Caco-2 (cell line): ENCODE measurements at regions of chr22 and their contacts with region 1.

Region 1: DNA sequence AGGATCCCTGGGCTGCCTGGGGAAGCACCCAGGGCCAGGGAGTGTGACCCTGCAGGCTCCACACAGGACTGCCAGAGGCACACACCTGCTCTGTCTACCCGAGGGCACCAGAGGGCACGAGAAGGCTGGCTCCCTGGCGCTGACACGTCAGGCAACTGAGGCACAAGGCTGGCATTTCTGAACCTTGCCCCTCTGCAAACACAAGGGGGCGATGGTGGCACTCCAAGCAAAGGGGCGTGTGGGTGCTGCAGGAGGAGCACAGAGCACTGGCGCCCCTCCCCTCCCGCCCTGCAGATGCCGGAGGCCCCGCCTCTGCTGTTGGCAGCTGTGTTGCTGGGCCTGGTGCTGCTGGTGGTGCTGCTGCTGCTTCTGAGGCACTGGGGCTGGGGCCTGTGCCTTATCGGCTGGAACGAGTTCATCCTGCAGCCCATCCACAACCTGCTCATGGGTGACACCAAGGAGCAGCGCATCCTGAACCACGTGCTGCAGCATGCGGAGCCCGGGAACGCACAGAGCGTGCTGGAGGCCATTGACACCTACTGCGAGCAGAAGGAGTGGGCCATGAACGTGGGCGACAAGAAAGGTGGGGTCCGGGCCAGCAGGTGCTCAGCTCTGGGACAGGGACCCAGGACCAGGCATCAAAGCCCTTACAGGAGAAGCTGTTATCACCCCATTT is 20.8 kb upstream of the TXNRD2 start:
- DNase-seq: peak; percentile 80 to 89
- H3K4me3 ChIP-seq: peak overlapping the region; percentile 50
- H3K4me3 Mint-ChIP-seq: peak overlapping the region; percentile 94
- H3K27ac Mint-ChIP-seq: peak overlapping the region; percentile 100
- H3K4me1 ChIP-seq: peaks cover 57% of the 10 kb centered on the region
- H3K4me1 Mint-ChIP-seq: peaks cover 20% of the 10 kb centered on the region
- H3K27me3 ChIP-seq: no peaks in the 10 kb centered on the region
- H3K27me3 Mint-ChIP-seq: no peaks in the 10 kb centered on the region
- CTCF ChIP-seq: peak; percentile 69 to 72

Region 2: DNA sequence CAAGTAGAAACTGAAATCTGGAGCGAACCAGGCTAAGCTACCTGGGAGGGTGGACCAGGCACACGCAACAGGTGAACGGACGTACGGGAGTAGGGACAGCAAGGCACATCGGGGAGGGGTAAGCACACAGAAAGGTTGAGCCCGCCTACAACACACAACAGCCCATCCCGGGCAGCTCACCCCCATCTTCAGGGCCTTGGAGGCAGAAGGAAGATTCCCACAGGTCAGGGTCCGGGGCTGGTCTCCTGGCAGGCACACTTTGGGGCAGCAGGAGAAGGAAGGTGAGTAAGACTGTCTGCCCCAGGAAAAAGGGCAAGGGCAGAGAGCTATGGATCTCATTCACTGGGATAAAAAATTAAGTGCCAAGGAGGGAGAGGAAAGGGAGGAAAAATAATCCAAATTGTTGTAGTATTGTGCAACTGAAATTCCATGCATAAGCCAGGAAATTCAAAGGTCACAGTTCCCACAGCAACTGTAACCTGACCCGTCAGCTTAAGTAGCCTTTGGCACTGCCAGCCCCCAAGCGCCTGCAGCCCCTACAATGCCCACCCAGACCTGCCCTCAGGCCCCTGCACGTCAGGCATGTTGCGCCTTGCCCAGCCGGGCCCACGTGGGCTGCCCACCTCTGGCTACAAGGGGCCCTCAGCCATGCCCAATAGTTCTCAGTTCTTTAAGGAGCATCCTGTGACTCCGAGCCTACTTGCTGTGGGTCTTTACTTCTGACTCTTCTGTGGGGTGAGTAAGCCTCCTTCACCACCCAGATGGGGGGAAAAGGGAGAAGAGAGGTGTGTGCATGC is 1989.8 kb before region 1 on chr22:
- CTCF ChIA-PET with region 1: no interaction called
- POLR2A ChIA-PET with region 1: interaction called, 16 read pairs
- intact Hi-C with region 1: no loop called
- DNase-seq: peak; percentile 51 to 59
- H3K4me3 ChIP-seq: no peak overlapping the region
- H3K4me3 Mint-ChIP-seq: peak overlapping the region; percentile 76
- H3K27ac Mint-ChIP-seq: peak overlapping the region; percentile 99
- H3K4me1 ChIP-seq: peaks cover 51% of the 10 kb centered on the region
- H3K4me1 Mint-ChIP-seq: peaks cover 45% of the 10 kb centered on the region
- H3K27me3 ChIP-seq: no peaks in the 10 kb centered on the region
- H3K27me3 Mint-ChIP-seq: no peaks in the 10 kb centered on the region
- CTCF ChIP-seq: no peak

Region 3: DNA sequence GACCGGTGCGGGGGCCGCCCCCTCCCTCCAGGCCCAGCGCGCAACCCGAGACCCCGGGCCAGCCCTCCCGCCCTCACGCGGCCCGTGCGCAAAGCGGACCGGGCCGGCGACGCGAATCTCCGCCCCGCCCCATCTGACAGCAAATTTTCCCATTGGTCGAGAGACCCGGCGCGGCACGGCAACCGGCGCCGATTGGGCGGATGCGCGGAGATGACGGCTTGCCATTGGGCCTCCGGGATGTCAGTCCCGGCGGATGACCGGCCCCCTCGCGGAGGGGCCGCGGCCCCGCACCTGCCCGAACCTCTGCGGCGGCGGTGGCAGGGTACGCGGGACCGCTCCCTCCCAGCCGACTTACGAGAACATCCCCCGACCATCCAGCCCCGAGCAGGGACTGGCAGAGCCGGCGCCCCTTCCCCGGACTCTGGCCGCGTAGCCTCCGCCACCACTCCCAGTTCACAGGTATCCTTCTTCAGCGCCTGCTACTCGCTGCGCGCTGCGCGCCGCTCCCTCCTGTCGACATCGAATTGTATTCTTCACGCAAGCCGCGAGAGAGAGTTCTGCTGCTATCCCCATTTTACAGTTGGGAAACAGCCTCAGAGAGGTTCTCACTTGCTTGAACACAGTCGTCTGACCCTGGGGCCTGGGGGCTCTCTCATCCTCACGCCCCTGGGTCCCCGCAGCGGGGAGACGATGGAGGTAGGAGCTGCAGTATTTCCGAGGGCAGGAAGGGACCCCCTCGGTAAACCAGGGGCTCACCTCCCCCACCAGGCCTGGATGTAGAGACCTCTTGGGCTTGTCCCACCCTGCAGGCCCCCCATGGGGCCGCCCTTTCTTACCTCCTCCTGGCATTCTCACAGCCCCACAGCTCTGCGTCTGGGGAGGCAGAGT is 54.6 kb after region 1 on chr22 and contains the start of gene ARVCF:
- CTCF ChIA-PET with region 1: interaction called, 5 read pairs
- POLR2A ChIA-PET with region 1: interaction called, 7 read pairs
- intact Hi-C with region 1: loop called (anchors 2 kb)
- DNase-seq: peak; percentile 90 to 96
- H3K4me3 ChIP-seq: peak within 1 kb of the TSS; percentile 57
- H3K4me3 Mint-ChIP-seq: peak within 1 kb of the TSS; percentile 85
- H3K27ac Mint-ChIP-seq: no peak within 1 kb of the TSS
- H3K4me1 ChIP-seq: peaks cover 13% of the 10 kb centered on the region
- H3K4me1 Mint-ChIP-seq: no peaks in the 10 kb centered on the region
- H3K27me3 ChIP-seq: no peaks in the 10 kb centered on the region; the same call in 1 of the 2 replicates
- H3K27me3 Mint-ChIP-seq: no peaks in the 10 kb centered on the region
- CTCF ChIP-seq: peak in 1 of 2 experiments; percentile 24
- total RNA-seq, gene ARVCF: 9.8 and 12.0 TPM in 2 replicates

Region 4: GRCh38 chr22:20079745-20080444 is 117.5 kb after region 1 on chr22 and contains the start of gene DGCR8:
- CTCF ChIA-PET with region 1: interaction called, 6 read pairs
- POLR2A ChIA-PET with region 1: no interaction called
- intact Hi-C with region 1: loop called (anchors 2 kb)
- DNase-seq: peak; percentile 94 to 97
- H3K4me3 ChIP-seq: peak within 1 kb of the TSS; percentile 62
- H3K4me3 Mint-ChIP-seq: peak within 1 kb of the TSS; percentile 79
- H3K27ac Mint-ChIP-seq: peak within 1 kb of the TSS; percentile 92
- H3K4me1 ChIP-seq: peaks cover 23% of the 10 kb centered on the region
- H3K4me1 Mint-ChIP-seq: peaks cover 22% of the 10 kb centered on the region
- H3K27me3 ChIP-seq: no peaks in the 10 kb centered on the region
- H3K27me3 Mint-ChIP-seq: no peaks in the 10 kb centered on the region
- CTCF ChIP-seq: no peak
- total RNA-seq, gene DGCR8: 53.1 and 60.0 TPM in 2 replicates

Region 5: GRCh38 chr22:20116951-20117645 is 154.7 kb after region 1 on chr22 and contains the start of gene TRMT2A:
- CTCF ChIA-PET with region 1: interaction called, 3 read pairs
- POLR2A ChIA-PET with region 1: no interaction called
- intact Hi-C with region 1: loop called (anchors 10 kb)
- DNase-seq: peak; percentile 97 to 99
- H3K4me3 ChIP-seq: peak within 1 kb of the TSS; percentile 87
- H3K4me3 Mint-ChIP-seq: peak within 1 kb of the TSS; percentile 81
- H3K27ac Mint-ChIP-seq: peak within 1 kb of the TSS; percentile 87
- H3K4me1 ChIP-seq: peaks cover 22% of the 10 kb centered on the region
- H3K4me1 Mint-ChIP-seq: peaks cover 6% of the 10 kb centered on the region
- H3K27me3 ChIP-seq: no peaks in the 10 kb centered on the region
- H3K27me3 Mint-ChIP-seq: no peaks in the 10 kb centered on the region
- CTCF ChIP-seq: peak in 1 of 2 experiments; percentile 17
- total RNA-seq, gene TRMT2A: 41.1 and 43.0 TPM in 2 replicates